Activated T-helper 1 cell treated with anti-CD3 and anti-CD28 coated beads, Interleukin-12 subunit alpha, Interleukin-12 subunit beta, Interleukin-2, Interleukin-4 antibody, amounts not matched to agents 30 ng/mL and 10 ng/mL and 1 ng/mL, durations not matched to agents 14 hours and 24 hours and 36 hours (primary cell): ENCODE measurements at regions of chr11 and their contacts with region 1.

Region 1: GRCh38 chr11:102589047-102589459 is 36.1 kb downstream of the MMP20 start:
- DNase-seq: no peak
- H3K4me3 Mint-ChIP-seq: no peak overlapping the region
- H3K27ac Mint-ChIP-seq: peak overlapping the region; percentile 74
- H3K4me1 Mint-ChIP-seq: peaks cover 49% of the 10 kb centered on the region
- H3K27me3 Mint-ChIP-seq: no peaks in the 10 kb centered on the region

Region 2: DNA sequence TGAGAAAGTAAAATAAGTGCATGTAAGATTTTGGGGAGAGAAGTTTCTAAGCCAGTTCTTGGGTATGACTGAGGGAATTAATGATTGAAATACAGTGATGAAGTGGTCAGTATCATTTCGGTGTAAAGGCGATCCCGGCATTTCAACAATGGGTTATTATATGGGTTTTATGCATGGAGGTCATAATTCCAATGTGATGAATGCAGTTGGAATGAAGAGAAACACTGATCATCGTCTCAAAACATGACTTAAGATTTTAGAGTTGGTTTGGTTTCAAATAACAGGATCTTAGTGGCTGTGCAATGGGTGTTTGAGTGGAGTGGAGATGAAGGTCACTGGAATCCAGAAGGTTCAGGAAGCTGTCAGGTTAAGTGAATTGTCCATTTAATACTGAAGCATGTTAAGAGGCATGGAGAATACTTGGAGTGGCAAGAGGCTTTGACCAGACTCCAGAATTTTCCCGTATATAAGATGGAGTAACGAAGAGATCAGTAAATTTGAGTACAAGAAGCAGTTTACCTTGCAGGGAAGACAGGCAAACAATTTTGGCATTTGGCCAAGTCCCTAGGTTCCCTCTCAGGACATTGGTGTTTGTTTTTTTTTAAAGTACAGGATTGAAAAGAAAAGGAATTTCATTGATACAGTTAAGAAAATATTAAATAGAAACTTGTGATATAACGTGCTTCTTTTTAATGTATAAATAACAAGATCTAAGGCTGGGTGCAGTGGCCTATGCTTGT is 368.2 kb before region 1 on chr11:
- intact Hi-C with region 1: no loop called
- DNase-seq: no peak
- H3K4me3 Mint-ChIP-seq: no peak overlapping the region
- H3K27ac Mint-ChIP-seq: no peak overlapping the region
- H3K4me1 Mint-ChIP-seq: no peaks in the 10 kb centered on the region
- H3K27me3 Mint-ChIP-seq: peaks cover 4% of the 10 kb centered on the region

Region 3: GRCh38 chr11:102560555-102561011 is 28.5 kb before region 1 on chr11:
- intact Hi-C with region 1: loop called (anchors 1 kb)
- DNase-seq: no peak
- H3K4me3 Mint-ChIP-seq: peak overlapping the region; percentile 63
- H3K27ac Mint-ChIP-seq: no peak overlapping the region
- H3K4me1 Mint-ChIP-seq: peaks cover 50% of the 10 kb centered on the region
- H3K27me3 Mint-ChIP-seq: peaks cover 2% of the 10 kb centered on the region

Region 4: DNA sequence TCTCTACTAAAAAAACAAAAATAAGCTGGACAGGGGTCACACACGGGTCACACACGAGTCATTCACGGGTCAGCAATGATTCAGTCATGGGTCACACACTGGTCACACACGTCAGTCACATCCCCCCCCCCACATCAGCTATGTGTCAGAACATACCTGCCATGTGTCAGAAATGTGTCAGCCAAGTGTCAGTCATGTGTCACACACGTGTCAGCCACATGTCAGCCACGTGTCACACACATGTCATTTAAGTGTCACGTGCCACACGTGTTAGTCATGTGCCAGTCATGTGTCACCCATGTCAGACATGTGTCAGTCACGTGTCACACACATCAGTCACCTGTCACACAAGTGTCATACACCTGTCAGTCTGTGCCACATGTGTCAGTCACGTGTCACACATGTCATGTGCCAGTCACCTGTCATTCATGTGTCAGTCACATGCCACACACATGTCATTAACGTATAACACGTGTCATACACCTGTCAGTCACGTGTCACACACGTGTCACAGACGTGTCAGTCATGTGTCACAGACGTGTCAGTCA is 64.8 kb after region 1 on chr11:
- intact Hi-C with region 1: no loop called
- DNase-seq: no peak
- H3K4me3 Mint-ChIP-seq: no peak overlapping the region
- H3K27ac Mint-ChIP-seq: no peak overlapping the region
- H3K4me1 Mint-ChIP-seq: no peaks in the 10 kb centered on the region
- H3K27me3 Mint-ChIP-seq: peaks cover 12% of the 10 kb centered on the region

Region 5: DNA sequence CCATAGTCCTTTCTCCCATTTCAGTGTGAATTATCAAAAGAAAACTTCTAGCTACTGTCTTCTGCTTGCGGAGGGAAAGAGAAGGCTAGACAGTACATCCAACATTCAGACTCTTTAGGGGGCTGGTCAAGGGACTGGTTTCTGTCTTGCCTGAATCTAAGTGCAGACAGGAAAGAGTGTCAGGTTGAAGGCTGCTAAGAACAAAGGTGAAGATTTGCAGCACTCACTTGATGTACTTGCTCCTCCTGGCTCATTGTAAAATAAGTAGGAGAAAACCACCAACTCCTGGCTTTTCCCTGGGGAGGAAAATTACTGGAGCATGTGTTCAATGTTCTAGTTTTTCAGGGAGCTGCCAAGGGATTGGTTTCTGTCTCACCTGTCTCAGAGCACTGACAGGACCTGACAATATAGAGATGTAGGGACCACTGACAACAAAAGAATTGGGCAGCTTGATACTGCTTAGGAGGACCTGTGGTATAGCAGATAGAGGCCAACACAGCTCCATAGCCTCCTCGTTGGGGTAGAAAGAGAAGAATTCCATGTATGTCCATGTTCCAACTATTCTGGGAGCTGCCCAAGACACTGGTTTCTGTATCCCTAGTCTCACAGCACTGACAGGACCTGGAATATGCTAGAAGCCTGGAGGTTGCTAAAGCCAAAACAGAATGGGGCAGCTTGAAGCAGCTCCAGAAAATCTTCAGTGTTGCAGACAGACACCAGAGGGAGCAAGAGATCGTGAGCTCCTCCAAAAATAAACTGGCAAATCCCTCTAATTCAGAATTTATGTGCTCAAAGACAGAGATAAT is 325.4 kb after region 1 on chr11:
- intact Hi-C with region 1: no loop called
- DNase-seq: no peak
- H3K4me3 Mint-ChIP-seq: no peak overlapping the region
- H3K27ac Mint-ChIP-seq: no peak overlapping the region
- H3K4me1 Mint-ChIP-seq: no peaks in the 10 kb centered on the region
- H3K27me3 Mint-ChIP-seq: peaks cover 6% of the 10 kb centered on the region